ENCODE measurements at regions of chr9 and their contacts with region 1.

Region 1: GRCh38 chr9:78213712-78214111 is 22.2 kb upstream of the CEP78 start:
- DNase-seq: no peak

Region 2: DNA sequence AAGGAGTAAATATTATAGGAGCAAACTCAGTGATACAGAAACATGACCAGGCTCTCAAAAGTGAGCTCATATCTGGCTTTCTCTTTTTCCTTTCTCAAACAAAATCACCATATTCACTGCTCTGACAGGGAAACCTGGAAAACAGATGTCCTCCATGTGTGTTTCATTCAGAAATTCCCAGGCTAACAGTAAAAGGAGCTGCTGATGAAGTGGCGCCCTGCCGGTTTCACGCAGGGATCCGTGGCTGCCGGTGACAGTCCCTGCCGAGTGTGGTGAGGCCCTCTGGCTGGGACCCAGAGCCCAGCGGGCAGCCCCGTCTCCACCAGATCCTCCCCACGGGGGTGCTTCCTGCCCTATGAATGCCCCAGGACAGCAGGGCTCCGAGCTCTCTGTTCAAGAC is 773.7 kb before region 1 on chr9:
- intact Hi-C with region 1: loop called (anchors 10 kb)
- DNase-seq: peak in 6 of 10 donors; percentile 27 to 91 (median 42)

Region 3: DNA sequence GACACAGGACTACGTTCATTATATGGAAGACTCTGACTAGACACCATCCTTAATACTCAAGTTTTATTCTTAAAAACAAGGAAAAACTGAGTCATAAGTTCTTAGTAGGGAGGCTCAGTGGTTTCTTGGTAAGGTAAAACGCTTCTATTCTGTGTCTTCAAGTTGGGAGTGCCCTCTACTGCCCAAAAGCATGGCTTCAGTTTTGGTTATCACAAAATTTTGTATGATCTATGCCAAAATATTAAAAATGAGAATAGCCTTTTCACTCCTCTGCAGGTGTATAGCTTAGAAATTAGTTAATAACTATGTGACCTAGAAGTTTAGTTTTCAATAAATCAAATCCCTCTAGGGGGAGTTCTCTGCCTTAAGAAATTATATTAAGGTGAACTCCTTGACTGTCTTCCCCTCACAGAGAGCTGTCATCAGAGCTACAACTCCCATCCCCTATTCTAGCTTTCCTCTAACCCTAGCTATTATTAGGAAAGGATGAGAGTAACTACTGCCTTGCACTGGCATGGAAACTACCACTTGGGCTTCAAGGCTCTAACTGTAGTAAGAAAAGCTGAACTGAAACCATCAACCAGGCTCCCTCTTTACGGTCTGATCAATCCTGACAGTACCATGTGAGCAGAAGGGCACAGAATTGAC is 371.8 kb before region 1 on chr9:
- intact Hi-C with region 1: loop called (anchors 10 kb)
- DNase-seq: no peak

Region 4: GRCh38 chr9:77977210-77977611 is 236.5 kb before region 1 on chr9:
- intact Hi-C with region 1: loop called (anchors 10 kb)
- DNase-seq: peak in 9 of 10 donors; percentile 27 to 93 (median 61)

Region 5: DNA sequence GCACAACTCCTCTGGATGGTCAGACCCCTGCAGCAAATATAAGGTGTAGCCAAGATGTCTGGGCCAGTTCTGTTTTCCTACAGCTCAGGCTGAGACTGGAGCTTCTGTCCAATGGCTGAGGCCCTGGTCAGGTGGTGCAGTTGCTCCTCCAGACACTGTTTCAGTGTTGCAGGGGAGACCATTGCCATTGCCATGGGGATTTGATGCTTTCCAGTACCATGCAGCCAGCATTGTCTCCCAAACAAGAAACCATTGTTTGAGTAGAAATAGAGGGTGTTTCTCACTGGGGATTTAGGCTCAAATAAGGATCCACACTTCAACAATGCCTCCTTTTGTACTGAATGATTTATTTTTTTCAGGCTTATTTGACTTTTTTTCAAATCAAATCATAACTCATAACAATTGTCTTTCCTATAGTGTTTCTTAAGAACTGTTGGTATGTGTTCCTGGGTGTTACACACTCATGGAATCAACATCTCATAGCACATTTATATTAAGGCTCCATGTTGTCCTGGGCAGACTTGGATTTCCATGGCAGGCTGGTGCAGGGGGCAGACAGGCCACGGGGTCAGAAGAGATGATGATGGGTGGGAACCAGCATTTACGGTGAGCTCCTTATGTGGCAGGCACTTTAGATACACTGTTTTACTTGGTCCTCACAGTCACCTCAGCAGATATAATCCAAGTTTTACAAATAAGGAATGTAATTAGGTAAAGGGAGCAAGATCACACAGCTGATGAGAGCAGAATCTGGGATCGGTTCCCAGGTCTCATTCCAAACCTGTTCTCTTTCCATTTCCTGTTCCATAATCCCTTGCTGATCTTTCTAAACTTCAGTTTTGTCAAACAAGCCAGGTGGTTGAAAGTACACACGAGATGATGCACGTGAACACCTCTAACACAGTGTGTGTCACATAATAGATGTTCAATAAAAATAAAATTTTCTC is 86.2 kb before region 1 on chr9:
- intact Hi-C with region 1: loop called (anchors 5 kb)
- DNase-seq: peak; percentile 58 to 97 (median 85)

Region 6: GRCh38 chr9:78424299-78424698 is 210.6 kb after region 1 on chr9:
- intact Hi-C with region 1: no loop called
- DNase-seq: no peak

Measured in posterior cingulate gyrus (tissue), 11 donors.